ENCODE measurements at regions of chr19 and their contacts with region 1.

Region 1: GRCh38 chr19:1592755-1593500 is at the start of gene MBD3:
- DNase-seq: peak; percentile 93
- ATAC-seq: peak; percentile 87
- H3K4me3 ChIP-seq: peak within 1 kb of the TSS; percentile 36 to 90 (median 80)
- H3K4me3 Mint-ChIP-seq: peak within 1 kb of the TSS; percentile 93
- H3K27ac ChIP-seq: peak within 1 kb of the TSS; percentile 84 to 89
- H3K27ac Mint-ChIP-seq: peak within 1 kb of the TSS; percentile 89
- H3K4me1 ChIP-seq: peaks cover 17 to 34% of the 10 kb centered on the region in 2 donors
- H3K4me1 Mint-ChIP-seq: peaks cover 29% of the 10 kb centered on the region
- H3K27me3 ChIP-seq: no peaks in the 10 kb centered on the region
- H3K27me3 Mint-ChIP-seq: no peaks in the 10 kb centered on the region
- CTCF ChIP-seq: no peak
- total RNA-seq, gene MBD3: 84.6 and 87.6 TPM in 2 replicates

Region 2: DNA sequence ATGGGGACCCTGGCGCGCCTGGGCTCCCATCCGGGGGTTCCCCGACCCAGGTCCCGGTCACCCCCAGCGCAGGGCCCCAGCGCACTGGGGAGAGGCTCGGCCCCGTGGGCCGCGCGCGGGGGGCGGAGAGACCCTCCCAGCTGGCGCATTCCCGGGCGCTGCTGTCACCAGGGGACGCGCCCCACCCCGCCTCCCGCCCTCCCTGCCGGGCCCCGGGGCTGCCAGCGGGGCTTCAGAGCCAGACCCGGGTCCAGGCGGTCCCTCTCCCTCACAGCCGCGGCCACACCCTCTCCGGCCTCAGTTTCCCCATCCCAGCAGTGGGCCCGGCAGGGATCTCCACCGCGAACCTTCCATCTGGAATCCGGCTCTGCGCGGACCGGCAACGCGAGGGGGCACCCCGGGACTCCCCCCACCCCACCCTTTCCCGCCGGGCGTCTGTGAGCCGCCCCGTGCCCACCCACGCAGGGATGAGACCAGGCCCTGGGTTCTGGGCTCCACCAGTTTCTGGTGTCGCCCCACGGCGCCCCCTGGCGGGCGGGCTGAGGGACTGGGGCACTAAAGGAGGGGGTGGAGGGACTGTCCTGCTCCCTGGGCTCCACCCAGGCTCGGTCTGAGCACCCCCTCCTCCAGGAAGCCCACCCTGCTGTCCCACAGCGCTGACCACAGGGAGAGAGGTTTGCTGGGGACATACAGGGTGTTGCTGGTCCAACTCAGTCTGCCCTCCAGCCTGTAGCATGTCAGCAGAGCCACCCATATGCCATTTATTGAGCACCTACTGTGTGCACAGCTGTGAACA is 79.2 kb before region 1 on chr19:
- CTCF ChIA-PET with region 1: no interaction called
- POLR2A ChIA-PET with region 1: no interaction called
- intact Hi-C with region 1: no loop called
- DNase-seq: peak; percentile 63
- ATAC-seq: peak; percentile 63
- H3K4me3 ChIP-seq: peak overlapping the region in 3 of 5 experiments; percentile 8 to 25 (median 17)
- H3K4me3 Mint-ChIP-seq: peak overlapping the region; percentile 41
- H3K27ac ChIP-seq: no peak overlapping the region
- H3K27ac Mint-ChIP-seq: no peak overlapping the region
- H3K4me1 ChIP-seq: peaks cover 9 to 13% of the 10 kb centered on the region in 2 donors
- H3K4me1 Mint-ChIP-seq: peaks cover 5% of the 10 kb centered on the region
- H3K27me3 ChIP-seq: peaks cover 0 to 58% (median 13%) of the 10 kb centered on the region in 4 experiments
- H3K27me3 Mint-ChIP-seq: peaks cover 38% of the 10 kb centered on the region
- CTCF ChIP-seq: peak; percentile 69

Region 3: GRCh38 chr19:1568320-1569019 is 24.5 kb before region 1 on chr19 and contains the start of gene MEX3D:
- CTCF ChIA-PET with region 1: interaction called, 3 read pairs
- POLR2A ChIA-PET with region 1: no interaction called
- intact Hi-C with region 1: loop called (anchors 1 kb)
- DNase-seq: peak; percentile 90
- ATAC-seq: peak; percentile 94
- H3K4me3 ChIP-seq: peak within 1 kb of the TSS in 3 of 5 experiments; percentile 29 to 56 (median 38)
- H3K4me3 Mint-ChIP-seq: peak within 1 kb of the TSS; percentile 66
- H3K27ac ChIP-seq: no peak within 1 kb of the TSS
- H3K27ac Mint-ChIP-seq: peak within 1 kb of the TSS; percentile 41
- H3K4me1 ChIP-seq: peaks cover 11 to 13% of the 10 kb centered on the region in 2 donors
- H3K4me1 Mint-ChIP-seq: peaks cover 2% of the 10 kb centered on the region
- H3K27me3 ChIP-seq: peaks cover 0 to 18% (median 0%) of the 10 kb centered on the region in 4 experiments
- H3K27me3 Mint-ChIP-seq: peaks cover 3% of the 10 kb centered on the region
- CTCF ChIP-seq: no peak
- total RNA-seq, gene MEX3D: 3.0 and 4.2 TPM in 2 replicates

Region 4: GRCh38 chr19:1680976-1681375 is 88.0 kb after region 1 on chr19:
- CTCF ChIA-PET with region 1: no interaction called
- POLR2A ChIA-PET with region 1: no interaction called
- intact Hi-C with region 1: no loop called
- DNase-seq: no peak
- ATAC-seq: no peak
- H3K4me3 ChIP-seq: no peak overlapping the region
- H3K4me3 Mint-ChIP-seq: no peak overlapping the region
- H3K27ac ChIP-seq: no peak overlapping the region
- H3K27ac Mint-ChIP-seq: no peak overlapping the region
- H3K4me1 ChIP-seq: peaks cover 0 to 1% of the 10 kb centered on the region in 2 donors
- H3K4me1 Mint-ChIP-seq: no peaks in the 10 kb centered on the region
- H3K27me3 ChIP-seq: peaks cover 0 to 54% (median 17%) of the 10 kb centered on the region in 4 experiments
- H3K27me3 Mint-ChIP-seq: peaks cover 41% of the 10 kb centered on the region
- CTCF ChIP-seq: no peak

Region 5: GRCh38 chr19:1718420-1719291 is 125.7 kb after region 1 on chr19:
- CTCF ChIA-PET with region 1: no interaction called
- POLR2A ChIA-PET with region 1: no interaction called
- intact Hi-C with region 1: no loop called
- DNase-seq: no peak
- ATAC-seq: no peak
- H3K4me3 ChIP-seq: no peak overlapping the region
- H3K4me3 Mint-ChIP-seq: no peak overlapping the region
- H3K27ac ChIP-seq: no peak overlapping the region
- H3K27ac Mint-ChIP-seq: no peak overlapping the region
- H3K4me1 ChIP-seq: peaks cover 0 to 3% of the 10 kb centered on the region in 2 donors
- H3K4me1 Mint-ChIP-seq: no peaks in the 10 kb centered on the region
- H3K27me3 ChIP-seq: peaks cover 0 to 54% (median 16%) of the 10 kb centered on the region in 4 experiments
- H3K27me3 Mint-ChIP-seq: peaks cover 58% of the 10 kb centered on the region
- CTCF ChIP-seq: no peak

Measured in B cell (primary cell).